H1 (cell line): ENCODE measurements at regions of chr4 and their contacts with region 1.

Region 1: GRCh38 chr4:13248621-13249298 is 235.4 kb downstream of the RAB28 start:
- DNase-seq: no peak
- H3K4me3 ChIP-seq: no peak overlapping the region
- H3K27ac ChIP-seq: no peak overlapping the region
- H3K4me1 ChIP-seq: peaks cover 0 to 5% (median 0%) of the 10 kb centered on the region in 4 experiments; a peak in 1 of 7 replicates
- H3K27me3 ChIP-seq: no peaks in the 10 kb centered on the region
- CTCF ChIP-seq: peak in 2 of 3 experiments; percentile 51 to 61; a peak in 3 of 4 replicates
- EP300 ChIP-seq: no peak
- POLR2A ChIP-seq: no peak
- RAD21 ChIP-seq: peak; percentile 56 to 59

Region 2: DNA sequence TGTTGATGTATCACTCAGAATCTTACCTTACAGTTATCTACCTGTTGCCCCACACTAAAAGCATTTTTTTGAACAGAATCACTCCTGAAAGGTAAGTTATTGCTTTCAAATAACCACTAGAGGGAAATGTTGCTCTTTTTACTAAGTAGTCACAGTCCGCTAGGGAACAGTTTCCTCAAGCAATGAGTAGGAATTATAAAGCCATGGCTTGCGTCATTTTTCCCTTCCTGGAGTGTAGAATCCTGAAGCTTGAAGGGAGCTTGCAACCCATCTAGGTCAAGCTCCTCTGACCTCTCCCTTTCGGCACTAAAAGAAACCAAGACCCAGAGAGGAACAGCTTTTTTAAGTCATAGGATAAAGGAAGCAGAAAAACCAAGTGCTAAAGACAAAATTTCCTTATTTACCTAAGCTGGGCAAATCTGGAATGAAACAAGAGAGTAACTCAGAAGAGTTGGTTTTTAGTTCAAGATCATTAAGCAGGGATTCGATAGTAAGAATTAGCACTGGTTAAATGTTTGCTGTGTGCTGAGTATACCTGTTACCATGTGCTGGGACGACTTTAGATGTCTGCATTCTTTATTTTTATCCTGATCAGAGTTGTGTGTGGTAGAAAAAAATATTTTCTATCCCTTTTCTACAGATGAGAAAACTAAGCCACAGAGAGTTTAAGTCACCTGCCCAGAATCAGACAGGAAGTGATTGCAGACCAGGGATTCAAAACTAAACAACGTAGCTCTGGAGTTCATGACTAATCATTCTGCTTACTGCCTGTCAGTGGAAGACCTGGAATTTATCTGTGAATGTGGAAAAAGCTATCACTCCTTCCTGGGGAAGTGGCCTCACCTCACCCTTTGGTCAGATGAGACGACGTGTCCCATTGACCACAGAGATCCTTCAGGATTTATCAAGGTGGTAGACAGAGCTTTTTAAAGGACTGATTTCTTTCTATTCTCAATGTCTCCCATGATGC is 396.1 kb before region 1 on chr4:
- CTCF ChIA-PET with region 1: interaction called, 10 read pairs
- POLR2A ChIA-PET with region 1: no interaction called
- DNase-seq: peak in 1 of 2 experiments; percentile 15
- H3K4me3 ChIP-seq: no peak overlapping the region
- H3K27ac ChIP-seq: no peak overlapping the region
- H3K4me1 ChIP-seq: no peaks in the 10 kb centered on the region
- H3K27me3 ChIP-seq: peaks cover 0 to 1% (median 0%) of the 10 kb centered on the region in 4 experiments; a peak in 1 of 7 replicates
- CTCF ChIP-seq: peak in 2 of 3 experiments; percentile 51 to 62; a peak in 2 of 4 replicates
- EP300 ChIP-seq: no peak
- POLR2A ChIP-seq: no peak
- RAD21 ChIP-seq: peak; percentile 90 to 94

Region 3: DNA sequence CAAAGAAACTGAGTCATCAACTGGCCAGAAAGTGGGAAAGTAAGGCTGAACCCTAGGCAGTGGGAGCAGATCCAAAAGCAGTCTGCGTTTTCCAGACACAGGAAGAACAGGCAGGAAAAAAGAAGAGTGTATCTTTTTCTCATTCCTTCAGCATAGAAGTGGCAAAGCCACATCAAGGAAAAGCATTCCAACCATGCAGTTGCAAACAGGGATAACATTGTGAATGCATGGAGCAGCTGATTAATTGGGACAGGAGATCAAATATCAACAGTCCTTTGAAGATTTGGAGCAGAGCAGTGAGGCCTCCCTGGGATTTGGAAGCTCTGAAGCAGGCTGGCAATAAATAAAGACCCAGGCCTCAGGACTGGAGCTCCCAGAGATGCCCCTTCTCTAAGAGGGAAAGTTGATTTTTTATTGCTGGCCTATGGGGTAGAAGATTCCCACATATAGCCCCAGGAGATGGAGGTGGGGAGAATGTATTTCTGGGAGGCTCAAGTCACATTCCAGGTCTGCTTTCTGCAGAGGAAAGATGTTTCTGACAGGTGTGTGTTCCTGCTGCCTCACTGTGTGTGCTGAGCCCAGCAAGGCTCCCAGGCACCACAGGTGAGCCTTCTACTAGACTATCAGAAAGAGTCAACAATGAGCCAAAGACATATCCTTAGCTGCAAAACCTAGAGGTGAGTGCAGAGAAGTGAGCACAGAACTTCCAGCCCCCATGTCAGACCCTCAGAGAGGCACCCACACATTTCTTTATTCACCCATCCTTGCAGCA is 12.9 kb after region 1 on chr4:
- CTCF ChIA-PET with region 1: interaction called, 19 read pairs
- POLR2A ChIA-PET with region 1: no interaction called
- DNase-seq: no peak
- H3K4me3 ChIP-seq: no peak overlapping the region
- H3K27ac ChIP-seq: no peak overlapping the region
- H3K4me1 ChIP-seq: 0 out of 7 replicates have a peak, but pooled peaks cover 0 to 2% (median 0%) of the 10 kb centered on the region in 4 experiments
- H3K27me3 ChIP-seq: peaks cover 0 to 1% (median 0%) of the 10 kb centered on the region in 4 experiments; a peak in 1 of 7 replicates
- CTCF ChIP-seq: no peak
- EP300 ChIP-seq: no peak
- POLR2A ChIP-seq: no peak
- RAD21 ChIP-seq: no peak